ENCODE measurements at regions of chr1 and their contacts with region 1.

Region 1: DNA sequence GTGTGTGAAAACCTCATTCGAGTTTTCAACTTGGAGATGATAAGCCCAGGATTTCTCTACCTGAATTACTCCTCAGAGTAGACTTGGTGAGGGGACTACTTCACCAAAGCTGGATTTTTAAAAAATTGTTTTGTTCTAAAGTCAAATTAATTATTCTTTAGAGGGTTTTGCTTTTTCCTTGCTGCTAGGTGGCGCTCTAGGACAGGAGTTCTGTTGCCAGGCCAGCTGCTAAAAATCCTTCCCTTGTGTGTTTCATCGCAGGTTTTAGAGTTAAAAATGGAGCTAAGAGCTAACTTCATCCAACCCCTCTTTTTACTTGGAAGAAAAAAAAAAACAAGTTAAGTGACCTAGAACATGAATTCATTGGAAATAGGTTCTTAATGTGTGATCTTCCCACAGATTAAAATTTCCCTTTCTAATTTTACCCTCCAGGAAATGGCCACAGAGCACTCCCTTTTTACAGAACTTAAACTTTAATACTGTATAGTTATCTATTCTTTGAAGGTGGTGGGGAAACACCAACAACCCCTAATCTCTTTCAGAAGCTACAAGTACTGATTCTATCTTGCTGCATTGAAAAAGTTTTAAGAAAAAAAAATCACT is 36.7 kb upstream of the FAM163A start:
- DNase-seq: no peak

Region 2: DNA sequence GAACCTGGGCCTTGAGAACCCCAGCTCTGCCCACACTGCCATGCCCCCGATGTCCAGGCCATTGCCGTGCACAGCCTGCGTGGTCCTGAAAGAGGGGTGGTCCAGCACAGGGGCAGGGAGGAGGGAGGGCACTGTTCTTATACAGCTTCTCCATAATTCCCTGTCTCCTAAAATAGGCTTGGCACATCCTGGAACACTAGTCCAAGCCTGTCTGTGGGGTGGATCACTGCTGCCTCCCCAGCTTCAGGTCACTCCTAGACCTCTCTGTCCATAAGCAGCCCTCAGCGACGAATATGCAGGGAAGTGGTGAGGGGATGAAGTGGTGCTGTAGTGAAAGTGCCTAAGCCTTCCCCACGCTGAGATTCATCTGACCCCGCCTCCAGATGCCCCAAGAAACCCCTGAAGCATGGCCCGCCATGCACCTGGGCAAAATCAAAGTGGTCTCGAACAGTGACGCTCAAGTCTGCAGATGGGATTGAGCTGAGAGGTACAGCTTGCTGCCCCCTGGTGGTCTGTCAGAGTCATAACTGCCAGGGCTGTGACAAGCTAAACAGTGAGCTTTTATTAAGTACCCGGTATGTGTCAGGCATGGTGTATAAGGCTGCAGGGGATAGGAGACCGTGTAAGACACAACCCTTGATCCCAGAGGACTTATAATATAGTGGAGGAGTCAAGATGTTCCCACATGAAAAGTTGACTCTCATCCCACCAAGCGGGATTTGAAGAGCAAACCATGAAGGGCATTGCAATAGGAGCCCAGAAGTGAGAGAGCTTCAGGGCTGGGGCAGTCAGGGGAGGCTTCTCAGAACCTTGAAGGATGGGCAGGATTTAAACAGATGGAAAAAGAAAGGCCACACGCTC is 103.3 kb after region 1 on chr1:
- intact Hi-C with region 1: loop called (anchors 1 kb)
- DNase-seq: no peak

Region 3: GRCh38 chr1:180154325-180155181 is 448.1 kb after region 1 on chr1 and contains the start of gene QSOX1:
- intact Hi-C with region 1: loop called (anchors 10 kb)
- DNase-seq: peak; percentile 96
- total RNA-seq, gene QSOX1: 106 TPM

Measured in cardiac septum (tissue), 1 donor.